ENCODE measurements at regions of chr7 and their contacts with region 1.

Region 1: DNA sequence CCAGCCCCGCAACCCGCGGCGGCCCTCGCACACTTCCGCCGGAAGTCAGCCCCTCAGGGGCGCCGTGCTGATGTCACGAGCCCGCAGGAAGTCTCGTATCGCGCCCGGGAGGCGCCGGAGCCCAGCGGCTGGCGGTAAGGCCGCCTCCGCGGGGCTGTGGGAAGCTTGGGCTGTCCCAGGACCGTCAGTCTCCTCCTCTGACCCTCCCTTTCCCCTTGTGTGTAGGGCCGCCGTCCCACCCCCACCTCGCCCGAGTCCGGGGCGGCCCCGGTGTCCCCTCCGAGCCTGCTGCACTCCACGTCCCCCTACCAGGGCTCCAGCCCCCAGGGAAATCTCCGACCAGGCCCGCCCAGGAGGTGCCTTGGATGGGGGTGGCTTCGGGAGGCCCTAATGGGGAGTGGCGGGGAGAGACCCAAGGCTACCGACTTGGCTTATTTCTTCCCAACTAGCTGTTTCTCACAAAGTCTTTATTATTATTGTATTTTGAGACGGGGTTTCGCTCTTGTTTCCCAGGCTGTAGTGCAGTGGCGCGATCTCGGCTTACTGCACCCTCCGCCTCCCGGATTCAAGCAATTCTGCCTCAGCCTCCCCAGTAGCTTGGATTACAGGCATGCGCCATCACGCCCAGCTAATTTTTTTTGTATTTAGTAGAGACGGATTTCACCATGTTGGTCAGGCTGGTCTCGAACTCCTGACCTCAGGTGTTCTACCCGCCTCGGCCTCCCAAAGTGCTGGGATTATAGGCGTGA is at the start of gene ZDHHC4:
- DNase-seq: peak; percentile 58 to 82
- H3K4me3 ChIP-seq: peak within 1 kb of the TSS; percentile 59 to 79 (median 72)
- H3K27ac ChIP-seq: peak within 1 kb of the TSS; percentile 85; the same call in 1 of the 2 replicates
- H3K4me1 ChIP-seq: no peaks in the 10 kb centered on the region
- H3K27me3 ChIP-seq: no peaks in the 10 kb centered on the region
- CTCF ChIP-seq: no peak
- EP300 ChIP-seq: no peak; a peak in 1 of 3 replicates
- POLR2A ChIP-seq: peak; percentile 79 to 95
- RAD21 ChIP-seq: no peak
- total RNA-seq, gene ZDHHC4: 50.2 and 50.8 TPM in 2 replicates

Region 2: GRCh38 chr7:6375348-6376101 is 202.0 kb before region 1 on chr7:
- CTCF ChIA-PET with region 1: no interaction called
- POLR2A ChIA-PET with region 1: no interaction called
- DNase-seq: no peak
- H3K4me3 ChIP-seq: peak overlapping the region; percentile 57 to 99 (median 90)
- H3K27ac ChIP-seq: 0 out of 2 replicates have a peak overlapping the region, but pooled peaks have one; percentile 6
- H3K4me1 ChIP-seq: peaks cover 0 to 10% (median 5%) of the 10 kb centered on the region in 4 experiments; a peak in 4 of 7 replicates
- H3K27me3 ChIP-seq: no peaks in the 10 kb centered on the region
- CTCF ChIP-seq: no peak
- EP300 ChIP-seq: no peak
- POLR2A ChIP-seq: no peak
- RAD21 ChIP-seq: no peak

Region 3: GRCh38 chr7:6545398-6546126 is 32.0 kb before region 1 on chr7:
- CTCF ChIA-PET with region 1: interaction called, 12 read pairs
- POLR2A ChIA-PET with region 1: no interaction called
- DNase-seq: no peak
- H3K4me3 ChIP-seq: no peak overlapping the region
- H3K27ac ChIP-seq: no peak overlapping the region
- H3K4me1 ChIP-seq: no peaks in the 10 kb centered on the region
- H3K27me3 ChIP-seq: peaks cover 0 to 3% (median 0%) of the 10 kb centered on the region in 4 experiments; a peak in 2 of 7 replicates
- CTCF ChIP-seq: no peak
- EP300 ChIP-seq: no peak
- POLR2A ChIP-seq: no peak
- RAD21 ChIP-seq: no peak

Region 4: GRCh38 chr7:6558837-6559236 is 18.7 kb before region 1 on chr7:
- CTCF ChIA-PET with region 1: interaction called, 54 read pairs
- POLR2A ChIA-PET with region 1: interaction called, 4 read pairs
- DNase-seq: no peak
- H3K4me3 ChIP-seq: no peak overlapping the region
- H3K27ac ChIP-seq: no peak overlapping the region
- H3K4me1 ChIP-seq: peaks cover 0 to 3% (median 1%) of the 10 kb centered on the region in 4 experiments; a peak in 3 of 7 replicates
- H3K27me3 ChIP-seq: no peaks in the 10 kb centered on the region
- CTCF ChIP-seq: peak; percentile 24 to 58 (median 56)
- EP300 ChIP-seq: no peak
- POLR2A ChIP-seq: no peak
- RAD21 ChIP-seq: peak; percentile 39 to 63; a peak in 3 of 4 replicates

Region 5: DNA sequence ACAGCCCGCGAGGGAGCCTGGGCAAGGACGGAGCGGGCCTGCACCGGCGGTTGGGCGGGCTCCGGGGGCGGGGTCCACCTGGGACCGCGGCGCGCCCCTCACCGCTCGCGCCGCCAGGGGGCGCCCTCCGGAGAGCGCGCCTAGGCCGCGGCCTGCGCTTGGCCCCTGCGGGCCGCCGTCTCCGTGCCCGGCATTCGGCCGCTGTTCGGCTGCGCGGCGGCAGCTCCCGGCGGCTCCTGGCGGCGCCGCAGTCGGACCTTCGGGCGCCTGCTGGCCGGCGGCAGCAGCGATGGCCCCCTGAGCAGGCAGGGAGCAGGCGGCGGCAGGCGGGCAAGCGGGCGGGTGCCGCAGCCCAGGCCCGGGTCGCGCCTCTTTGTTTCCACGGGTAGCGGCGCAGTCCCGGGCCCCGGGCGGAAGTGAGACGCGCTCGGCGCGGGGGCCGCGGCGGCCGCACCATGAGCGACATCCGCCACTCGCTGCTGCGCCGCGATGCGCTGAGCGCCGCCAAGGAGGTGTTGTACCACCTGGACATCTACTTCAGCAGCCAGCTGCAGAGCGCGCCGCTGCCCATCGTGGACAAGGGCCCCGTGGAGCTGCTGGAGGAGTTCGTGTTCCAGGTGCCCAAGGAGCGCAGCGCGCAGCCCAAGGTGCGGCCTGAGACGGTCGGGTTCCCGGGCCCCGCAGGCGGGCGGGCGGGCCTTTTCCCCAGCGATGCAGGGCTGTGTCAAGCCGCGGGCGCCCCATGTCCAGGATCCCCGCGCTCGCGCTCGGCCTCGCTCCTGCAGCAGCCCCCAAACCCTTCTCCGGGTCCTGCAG is 12.5 kb after region 1 on chr7 and contains the start of gene INTS15:
- CTCF ChIA-PET with region 1: interaction called, 15 read pairs
- POLR2A ChIA-PET with region 1: interaction called, 25 read pairs
- DNase-seq: peak in 1 of 2 experiments; percentile 87
- H3K4me3 ChIP-seq: peak within 1 kb of the TSS; percentile 77 to 86 (median 80)
- H3K27ac ChIP-seq: no peak within 1 kb of the TSS
- H3K4me1 ChIP-seq: peaks cover 0 to 3% (median 0%) of the 10 kb centered on the region in 4 experiments; a peak in 1 of 7 replicates
- H3K27me3 ChIP-seq: no peaks in the 10 kb centered on the region
- CTCF ChIP-seq: peak; percentile 81 to 95 (median 84)
- EP300 ChIP-seq: no peak
- POLR2A ChIP-seq: peak; percentile 83 to 90
- RAD21 ChIP-seq: peak in 1 of 2 experiments; percentile 56; a peak in 2 of 4 replicates
- total RNA-seq, gene INTS15: 25.7 and 26.1 TPM in 2 replicates

Region 6: GRCh38 chr7:6729492-6730342 is 152.2 kb after region 1 on chr7:
- CTCF ChIA-PET with region 1: no interaction called
- POLR2A ChIA-PET with region 1: no interaction called
- DNase-seq: peak; percentile 93
- H3K4me3 ChIP-seq: peak overlapping the region; percentile 68 to 96 (median 82)
- H3K27ac ChIP-seq: peak overlapping the region; percentile 21; the same call in 1 of the 2 replicates
- H3K4me1 ChIP-seq: peaks cover 0 to 4% (median 0%) of the 10 kb centered on the region in 4 experiments; a peak in 1 of 7 replicates
- H3K27me3 ChIP-seq: no peaks in the 10 kb centered on the region
- CTCF ChIP-seq: no peak
- EP300 ChIP-seq: no peak; a peak in 1 of 3 replicates
- POLR2A ChIP-seq: peak in 1 of 2 experiments; percentile 60; a peak in 1 of 3 replicates
- RAD21 ChIP-seq: peak in 1 of 2 experiments; percentile 15; a peak in 2 of 4 replicates